ENCODE measurements at regions of chr7 and their contacts with region 1.

Region 1: GRCh38 chr7:92723943-92724342 is 112.4 kb downstream of the CDK6 start:
- DNase-seq: no peak
- H3K4me3 ChIP-seq: no peak overlapping the region
- H3K27ac ChIP-seq: no peak overlapping the region
- H3K4me1 ChIP-seq: peaks cover 10% of the 10 kb centered on the region
- H3K27me3 ChIP-seq: no peaks in the 10 kb centered on the region
- CTCF ChIP-seq: no peak

Region 2: DNA sequence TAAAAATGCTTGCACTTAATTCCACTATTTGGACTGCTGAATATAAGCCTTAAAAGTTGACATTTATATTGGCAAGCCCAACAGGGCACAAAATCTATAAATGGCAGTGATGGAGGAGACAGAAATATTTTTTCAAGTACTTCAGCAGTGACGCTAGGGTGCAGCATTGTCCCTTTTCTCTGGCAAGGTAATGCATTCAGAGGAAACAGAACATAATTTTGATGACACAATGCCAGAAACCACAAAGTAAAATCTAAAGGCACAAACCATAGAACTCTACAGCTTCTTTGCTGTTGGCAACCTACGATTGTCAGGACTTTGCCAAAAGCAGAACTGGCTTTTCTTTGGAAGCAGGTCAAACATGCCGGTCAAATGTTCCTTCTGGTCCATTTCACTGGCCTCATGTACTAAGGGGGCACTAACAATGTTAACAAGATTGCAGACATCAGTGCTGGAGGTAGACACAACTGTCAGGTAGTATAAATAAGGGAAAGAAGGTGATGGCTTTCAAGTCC is 102.9 kb before region 1 on chr7:
- CTCF ChIA-PET with region 1: interaction called, 12 read pairs
- dilution Hi-C with region 1: no loop called
- in situ Hi-C with region 1: no loop called
- intact Hi-C with region 1: no loop called
- DNase-seq: peak; percentile 78
- H3K4me3 ChIP-seq: no peak overlapping the region
- H3K27ac ChIP-seq: peak overlapping the region; percentile 54
- H3K4me1 ChIP-seq: peaks cover 36% of the 10 kb centered on the region
- H3K27me3 ChIP-seq: no peaks in the 10 kb centered on the region
- CTCF ChIP-seq: peak; percentile 67 to 72

Region 3: DNA sequence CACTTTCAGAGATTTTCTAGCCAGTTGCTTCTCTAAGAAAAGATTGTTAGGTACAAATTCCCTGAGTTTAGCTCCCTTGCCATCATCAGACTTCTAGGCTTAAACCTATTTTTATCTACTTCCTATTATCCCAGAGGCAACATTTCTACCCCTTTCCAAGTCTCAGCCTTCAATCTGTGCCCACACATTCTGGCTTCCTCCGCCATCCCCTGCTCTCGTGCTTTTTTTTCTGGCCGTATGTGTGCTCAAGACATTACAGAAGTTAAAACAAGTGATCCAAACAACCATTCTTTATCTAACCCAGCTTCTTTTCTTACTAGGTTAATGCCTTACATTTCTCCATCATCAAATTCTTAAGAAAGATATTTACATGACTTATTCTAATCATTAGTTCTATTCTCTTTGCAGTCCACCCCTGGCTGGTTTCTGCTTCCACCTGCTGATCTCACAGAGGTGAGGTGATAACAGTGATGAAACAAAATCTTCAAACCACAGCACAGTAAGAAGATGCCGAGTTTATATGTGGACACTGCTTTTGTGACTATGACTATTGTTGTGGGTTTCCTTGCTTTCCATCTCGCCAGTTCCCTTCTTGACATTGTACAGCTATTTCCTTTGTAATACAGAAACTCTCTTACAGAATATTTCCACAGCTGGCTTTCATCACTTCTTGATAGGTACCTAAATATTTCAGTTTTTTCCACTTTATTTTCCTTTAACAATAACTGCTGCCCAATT is 130.7 kb after region 1 on chr7:
- CTCF ChIA-PET with region 1: no interaction called
- dilution Hi-C with region 1: no loop called
- in situ Hi-C with region 1: no loop called
- intact Hi-C with region 1: no loop called
- DNase-seq: no peak
- H3K4me3 ChIP-seq: no peak overlapping the region
- H3K27ac ChIP-seq: no peak overlapping the region
- H3K4me1 ChIP-seq: no peaks in the 10 kb centered on the region
- H3K27me3 ChIP-seq: no peaks in the 10 kb centered on the region
- CTCF ChIP-seq: no peak

Measured in mammary epithelial cell (primary cell).